A673 (cell line): ENCODE measurements at regions of chr6 and their contacts with region 1.

Region 1: DNA sequence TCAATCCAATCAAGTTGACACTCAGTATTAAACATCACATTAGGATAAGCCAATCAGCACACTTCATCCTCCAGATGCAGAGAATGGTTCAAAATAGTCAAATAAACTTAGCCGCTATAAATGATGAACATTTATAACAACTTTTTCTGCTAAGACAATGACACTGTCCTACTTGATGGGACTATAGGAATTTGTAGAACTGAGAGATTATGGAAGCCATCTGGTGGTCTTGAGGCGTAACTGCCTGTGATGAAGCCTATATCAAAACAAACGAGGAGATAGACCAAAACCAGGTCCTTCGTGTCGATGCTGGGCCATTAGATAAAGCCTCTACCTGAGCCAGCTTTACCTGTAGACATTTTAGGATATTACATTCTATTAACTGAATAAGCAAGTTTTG is 631.1 kb downstream of the COL12A1 start:
- DNase-seq: peak; percentile 65
- H3K4me3 ChIP-seq: no peak overlapping the region
- H3K27ac ChIP-seq: no peak overlapping the region
- H3K4me1 ChIP-seq: peaks cover 18% of the 10 kb centered on the region
- H3K27me3 ChIP-seq: no peaks in the 10 kb centered on the region
- CTCF ChIP-seq: peak; percentile 74

Region 2: GRCh38 chr6:74091136-74091793 is 483.5 kb before region 1 on chr6:
- CTCF ChIA-PET with region 1: no interaction called
- POLR2A ChIA-PET with region 1: no interaction called
- intact Hi-C with region 1: loop called (anchors 10 kb)
- DNase-seq: peak; percentile 75
- H3K4me3 ChIP-seq: no peak overlapping the region
- H3K27ac ChIP-seq: no peak overlapping the region
- H3K4me1 ChIP-seq: no peaks in the 10 kb centered on the region
- H3K27me3 ChIP-seq: no peaks in the 10 kb centered on the region
- CTCF ChIP-seq: peak; percentile 81